ENCODE measurements at regions of chr12 and their contacts with region 1.

Region 1: GRCh38 chr12:44930972-44931600 is 55.0 kb upstream of the NELL2 start:
- DNase-seq: no peak
- H3K4me3 Mint-ChIP-seq: no peak overlapping the region
- H3K27ac Mint-ChIP-seq: no peak overlapping the region
- H3K4me1 Mint-ChIP-seq: no peaks in the 10 kb centered on the region
- H3K27me3 Mint-ChIP-seq: no peaks in the 10 kb centered on the region

Region 2: DNA sequence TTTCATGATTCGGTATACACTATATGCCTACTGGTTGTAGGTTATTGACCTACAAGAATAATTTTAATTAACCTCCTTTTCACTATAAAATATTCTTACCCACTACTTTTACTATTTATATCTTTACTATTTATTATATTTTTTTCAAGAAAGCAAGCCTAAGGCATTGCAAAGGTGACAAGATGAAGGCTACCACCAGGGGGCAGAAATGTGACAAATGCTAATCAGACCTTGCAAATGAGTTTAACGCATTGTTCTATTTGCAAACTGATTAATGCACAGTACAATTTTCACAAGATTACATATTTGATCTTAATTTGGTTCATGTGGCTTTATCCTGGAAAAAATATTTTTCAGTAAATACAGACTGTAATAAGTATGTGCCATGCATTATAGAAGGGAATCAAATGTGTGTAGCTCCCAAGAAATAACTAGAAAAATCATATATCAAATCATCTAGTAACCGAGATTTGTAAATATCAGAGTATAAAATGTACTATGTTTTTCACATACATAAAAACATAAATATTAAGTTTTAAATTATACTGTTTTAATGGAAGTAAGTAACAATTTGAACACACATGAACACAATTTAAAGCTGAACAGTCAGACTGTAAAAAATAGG is 1486.0 kb before region 1 on chr12:
- CTCF ChIA-PET with region 1: no interaction called
- intact Hi-C with region 1: loop called (anchors 10 kb)
- DNase-seq: peak; percentile 72
- H3K4me3 Mint-ChIP-seq: no peak overlapping the region
- H3K27ac Mint-ChIP-seq: no peak overlapping the region
- H3K4me1 Mint-ChIP-seq: no peaks in the 10 kb centered on the region
- H3K27me3 Mint-ChIP-seq: peaks cover 8% of the 10 kb centered on the region

Region 3: GRCh38 chr12:44015335-44015941 is 915.6 kb before region 1 on chr12:
- CTCF ChIA-PET with region 1: interaction called, 13 read pairs
- intact Hi-C with region 1: loop called (anchors 1 kb)
- DNase-seq: no peak
- H3K4me3 Mint-ChIP-seq: no peak overlapping the region
- H3K27ac Mint-ChIP-seq: no peak overlapping the region
- H3K4me1 Mint-ChIP-seq: no peaks in the 10 kb centered on the region
- H3K27me3 Mint-ChIP-seq: no peaks in the 10 kb centered on the region

Region 4: DNA sequence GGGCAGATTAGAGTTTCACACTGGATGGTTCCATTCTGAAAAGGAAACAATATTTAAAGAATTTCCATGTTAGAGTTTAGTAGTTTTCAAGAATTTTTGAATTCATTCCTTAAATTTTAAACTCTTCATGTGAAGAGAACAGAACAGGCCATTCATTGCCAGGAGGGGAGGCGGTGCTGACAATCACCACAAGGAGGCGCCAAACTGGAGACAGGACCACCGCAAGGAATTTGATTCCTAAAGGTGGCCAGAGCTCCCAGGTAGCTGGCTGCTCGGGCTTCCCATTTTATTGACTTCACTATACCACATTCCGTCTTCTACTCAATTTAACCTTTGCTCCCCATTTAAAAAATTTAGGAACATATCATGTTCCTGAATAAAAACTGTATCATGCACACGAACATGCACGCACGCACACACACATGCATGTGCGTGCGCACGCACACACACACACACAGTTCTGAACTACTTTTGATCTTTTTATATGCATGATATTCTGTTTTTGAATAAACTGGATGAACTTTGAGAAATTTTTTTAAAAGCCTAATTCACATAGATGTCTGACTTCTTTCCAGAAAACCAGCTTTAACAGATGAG is 156.2 kb before region 1 on chr12:
- CTCF ChIA-PET with region 1: interaction called, 4 read pairs
- intact Hi-C with region 1: loop called (anchors 1 kb)
- DNase-seq: peak; percentile 75
- H3K4me3 Mint-ChIP-seq: no peak overlapping the region
- H3K27ac Mint-ChIP-seq: no peak overlapping the region
- H3K4me1 Mint-ChIP-seq: peaks cover 8% of the 10 kb centered on the region
- H3K27me3 Mint-ChIP-seq: no peaks in the 10 kb centered on the region

Region 5: GRCh38 chr12:44875954-44876553 is 55.0 kb before region 1 on chr12 and contains the start of gene NELL2:
- CTCF ChIA-PET with region 1: interaction called, 3 read pairs
- intact Hi-C with region 1: loop called (anchors 2 kb)
- DNase-seq: peak; percentile 82
- H3K4me3 Mint-ChIP-seq: peak within 1 kb of the TSS; percentile 99
- H3K27ac Mint-ChIP-seq: peak within 1 kb of the TSS; percentile 91
- H3K4me1 Mint-ChIP-seq: peaks cover 23% of the 10 kb centered on the region
- H3K27me3 Mint-ChIP-seq: peaks cover 6% of the 10 kb centered on the region
- total RNA-seq, gene NELL2: 61.9 to 72.2 TPM